Endothelial cell of umbilical vein (primary cell): ENCODE measurements at regions of chr14 and their contacts with region 1.

Region 1: DNA sequence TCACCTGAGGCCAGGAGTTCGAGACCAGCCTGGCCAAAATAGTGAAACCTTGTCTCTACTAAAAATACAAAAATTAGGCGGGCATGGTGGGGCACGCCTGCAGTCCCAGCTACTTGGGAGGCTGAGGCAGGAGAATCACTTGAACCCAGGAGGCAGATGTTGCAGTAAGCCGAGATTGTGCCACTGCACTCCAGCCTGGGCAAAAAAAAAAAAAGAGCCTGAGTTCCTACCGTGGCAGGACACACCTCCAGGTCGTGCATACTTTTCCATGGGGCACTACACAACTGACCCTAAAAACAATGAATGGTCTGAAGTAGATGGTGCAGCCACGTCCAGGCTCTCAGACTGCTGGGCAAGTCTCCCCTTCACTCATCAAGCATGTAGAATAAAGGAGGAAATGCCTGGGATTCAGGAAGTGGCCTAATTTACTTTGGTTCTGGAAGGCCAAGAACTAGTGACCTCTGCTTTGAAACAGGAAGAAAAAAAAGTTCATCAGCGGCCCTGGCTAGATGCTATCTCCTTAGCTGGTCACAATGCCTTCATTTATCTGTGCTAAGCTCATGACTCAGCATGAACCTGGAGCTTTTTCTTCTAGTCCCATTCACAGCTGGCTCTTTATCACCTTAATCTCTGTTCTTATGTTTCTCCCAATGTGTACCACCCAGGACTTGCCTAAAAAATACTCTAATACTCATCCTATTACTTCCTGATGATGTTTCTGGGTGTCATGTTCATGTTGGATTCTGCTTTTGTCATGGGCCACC is 55.8 kb upstream of the OR6J1 start:
- DNase-seq: peak; percentile 80
- H3K4me3 ChIP-seq: no peak overlapping the region
- H3K27ac ChIP-seq: peak overlapping the region; percentile 57
- H3K4me1 ChIP-seq: peaks cover 23% of the 10 kb centered on the region
- H3K27me3 ChIP-seq: no peaks in the 10 kb centered on the region
- CTCF ChIP-seq: no peak
- POLR2A ChIP-seq: peak; percentile 62

Region 2: GRCh38 chr14:22739423-22739822 is 39.4 kb after region 1 on chr14:
- CTCF ChIA-PET with region 1: interaction called, 5 read pairs
- POLR2A ChIA-PET with region 1: no interaction called
- dilution Hi-C with region 1: no loop called
- intact Hi-C with region 1: loop called (anchors 1 kb)
- DNase-seq: peak; percentile 88
- H3K4me3 ChIP-seq: no peak overlapping the region
- H3K27ac ChIP-seq: peak overlapping the region; percentile 97
- H3K4me1 ChIP-seq: peaks cover 30% of the 10 kb centered on the region
- H3K27me3 ChIP-seq: no peaks in the 10 kb centered on the region
- CTCF ChIP-seq: no peak
- POLR2A ChIP-seq: no peak